CD8-positive, alpha-beta T cell (primary cell): ENCODE measurements at regions of chr10 and their contacts with region 1.

Region 1: DNA sequence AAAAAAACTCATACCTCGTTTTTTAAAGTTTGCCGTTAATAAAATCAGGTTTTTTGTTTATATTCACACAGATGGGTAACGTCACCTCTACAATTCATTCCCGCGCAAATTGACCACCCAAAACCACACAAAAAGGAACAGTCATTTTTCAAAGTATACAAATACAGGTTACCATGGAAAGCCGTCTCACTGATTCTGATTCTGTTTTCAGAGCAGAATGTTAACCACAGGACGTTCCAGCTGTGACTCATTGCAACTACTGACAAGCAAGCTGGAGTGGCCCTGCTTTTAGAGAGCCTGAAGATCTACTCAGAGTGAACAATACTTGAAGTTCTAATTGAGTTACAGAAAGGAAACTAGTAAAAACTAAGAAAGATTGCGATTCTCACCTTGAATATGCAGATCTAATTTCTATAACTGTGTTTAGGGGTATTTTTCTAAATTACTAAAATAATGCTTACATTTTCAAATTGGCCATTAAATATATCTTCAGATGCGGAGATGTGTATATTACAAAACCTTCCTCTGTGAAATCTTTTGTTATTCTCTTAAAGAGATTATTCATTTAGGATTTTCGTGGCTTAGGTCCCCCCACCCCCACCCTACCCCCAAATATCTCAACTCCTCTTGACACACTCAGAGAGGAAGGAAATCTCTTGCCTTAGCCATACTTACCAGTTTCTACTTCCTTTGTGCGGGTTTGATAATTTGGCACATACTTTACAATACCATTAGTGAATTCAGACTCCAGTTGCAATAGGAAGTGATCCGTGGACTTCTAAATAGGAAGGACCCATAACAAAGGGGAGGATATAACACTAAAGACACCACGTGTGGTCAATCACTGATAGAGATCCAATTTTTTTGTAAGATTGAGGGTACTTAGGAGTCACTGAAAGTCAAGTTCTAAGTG is 106.0 kb downstream of the CUBN start:
- DNase-seq: peak; percentile 48 to 96 (median 72)
- ATAC-seq: peak; percentile 67
- H3K4me3 ChIP-seq: peak overlapping the region; percentile 16 to 44
- H3K4me3 Mint-ChIP-seq: peak overlapping the region; percentile 53
- H3K27ac ChIP-seq: peak overlapping the region; percentile 78 to 91
- H3K27ac Mint-ChIP-seq: peak overlapping the region; percentile 95
- H3K4me1 ChIP-seq: peaks cover 68% of the 10 kb centered on the region
- H3K4me1 Mint-ChIP-seq: peaks cover 65% of the 10 kb centered on the region
- H3K27me3 ChIP-seq: no peaks in the 10 kb centered on the region
- H3K27me3 Mint-ChIP-seq: no peaks in the 10 kb centered on the region
- CTCF ChIP-seq: no peak

Region 2: GRCh38 chr10:16828114-16828568 is 195.5 kb before region 1 on chr10:
- CTCF ChIA-PET with region 1: no interaction called
- POLR2A ChIA-PET with region 1: no interaction called
- intact Hi-C with region 1: loop called in 1 of 2 experiments (anchors 10 kb)
- DNase-seq: peak in 8 of 9 experiments; percentile 47 to 87 (median 63)
- ATAC-seq: peak; percentile 96
- H3K4me3 ChIP-seq: no peak overlapping the region
- H3K4me3 Mint-ChIP-seq: no peak overlapping the region
- H3K27ac ChIP-seq: no peak overlapping the region
- H3K27ac Mint-ChIP-seq: peak overlapping the region; percentile 45
- H3K4me1 ChIP-seq: no peaks in the 10 kb centered on the region
- H3K4me1 Mint-ChIP-seq: peaks cover 4% of the 10 kb centered on the region
- H3K27me3 ChIP-seq: no peaks in the 10 kb centered on the region
- H3K27me3 Mint-ChIP-seq: no peaks in the 10 kb centered on the region
- CTCF ChIP-seq: peak; percentile 69

Region 3: DNA sequence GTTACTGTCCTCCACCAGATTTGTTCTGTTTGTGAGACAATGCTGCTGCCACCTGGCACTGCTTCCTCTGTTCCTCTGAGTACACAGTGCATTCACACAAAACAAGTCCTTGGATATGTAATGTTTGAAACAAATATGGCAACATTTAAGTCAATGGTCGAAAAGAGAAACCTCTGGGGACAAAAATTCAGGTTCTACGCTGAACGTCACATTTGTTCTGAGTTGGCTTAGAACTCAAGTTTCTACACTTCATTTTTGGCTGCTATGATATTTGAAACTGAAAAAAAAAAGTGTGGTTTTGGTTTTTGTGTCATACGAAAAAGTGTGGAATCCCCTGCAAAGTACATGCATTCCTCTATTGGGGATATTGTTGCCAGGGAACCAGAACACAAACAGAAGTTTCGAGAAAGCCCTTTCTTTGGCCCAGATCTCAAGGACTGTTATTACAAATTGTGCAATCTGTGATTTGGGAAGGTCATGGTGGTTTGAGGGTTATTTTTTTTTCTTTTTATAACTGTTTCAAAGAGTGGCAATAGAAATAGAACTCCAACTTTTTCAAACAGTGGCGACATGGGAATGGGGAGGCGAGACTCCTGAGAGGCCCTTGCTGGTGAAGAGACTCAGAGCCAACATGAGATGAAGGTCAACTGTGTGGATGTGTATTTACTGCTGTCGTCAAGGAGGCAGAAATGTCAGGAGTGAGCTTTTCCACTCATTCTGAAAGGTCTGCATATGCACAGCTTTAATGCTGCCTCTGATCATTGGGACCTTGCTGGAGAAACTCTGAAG is 21.5 kb before region 1 on chr10:
- CTCF ChIA-PET with region 1: no interaction called
- POLR2A ChIA-PET with region 1: interaction called, 3 read pairs
- intact Hi-C with region 1: loop called (anchors 1 kb)
- DNase-seq: peak in 5 of 9 experiments; percentile 21 to 92 (median 43)
- ATAC-seq: peak; percentile 22
- H3K4me3 ChIP-seq: no peak overlapping the region
- H3K4me3 Mint-ChIP-seq: no peak overlapping the region
- H3K27ac ChIP-seq: peak overlapping the region; percentile 33 to 40
- H3K27ac Mint-ChIP-seq: peak overlapping the region; percentile 87
- H3K4me1 ChIP-seq: peaks cover 41% of the 10 kb centered on the region
- H3K4me1 Mint-ChIP-seq: peaks cover 47% of the 10 kb centered on the region
- H3K27me3 ChIP-seq: no peaks in the 10 kb centered on the region
- H3K27me3 Mint-ChIP-seq: no peaks in the 10 kb centered on the region
- CTCF ChIP-seq: no peak

Region 4: DNA sequence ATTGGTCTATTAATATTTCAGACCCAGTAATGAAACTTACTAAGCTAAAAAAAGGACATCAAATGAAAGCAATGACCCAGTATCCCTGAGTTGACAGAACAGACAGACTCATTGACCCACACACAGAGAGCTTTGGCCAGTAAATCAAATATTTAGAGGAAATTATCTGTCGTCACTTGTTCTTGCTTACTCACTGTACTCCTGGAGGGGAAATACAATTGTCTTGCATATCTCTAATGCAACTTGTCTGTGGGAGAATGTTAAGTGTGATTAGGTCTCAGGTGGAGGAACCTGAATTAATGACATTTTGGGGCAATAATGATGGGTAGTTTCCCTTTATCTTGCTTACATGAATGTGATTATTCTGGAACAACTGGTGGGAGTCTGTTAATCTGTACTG is 25.6 kb after region 1 on chr10:
- CTCF ChIA-PET with region 1: no interaction called
- POLR2A ChIA-PET with region 1: no interaction called
- intact Hi-C with region 1: no loop called
- DNase-seq: no peak
- ATAC-seq: no peak
- H3K4me3 ChIP-seq: no peak overlapping the region
- H3K4me3 Mint-ChIP-seq: no peak overlapping the region
- H3K27ac ChIP-seq: no peak overlapping the region
- H3K27ac Mint-ChIP-seq: no peak overlapping the region
- H3K4me1 ChIP-seq: no peaks in the 10 kb centered on the region
- H3K4me1 Mint-ChIP-seq: peaks cover 2% of the 10 kb centered on the region
- H3K27me3 ChIP-seq: no peaks in the 10 kb centered on the region
- H3K27me3 Mint-ChIP-seq: no peaks in the 10 kb centered on the region
- CTCF ChIP-seq: no peak

Region 5: DNA sequence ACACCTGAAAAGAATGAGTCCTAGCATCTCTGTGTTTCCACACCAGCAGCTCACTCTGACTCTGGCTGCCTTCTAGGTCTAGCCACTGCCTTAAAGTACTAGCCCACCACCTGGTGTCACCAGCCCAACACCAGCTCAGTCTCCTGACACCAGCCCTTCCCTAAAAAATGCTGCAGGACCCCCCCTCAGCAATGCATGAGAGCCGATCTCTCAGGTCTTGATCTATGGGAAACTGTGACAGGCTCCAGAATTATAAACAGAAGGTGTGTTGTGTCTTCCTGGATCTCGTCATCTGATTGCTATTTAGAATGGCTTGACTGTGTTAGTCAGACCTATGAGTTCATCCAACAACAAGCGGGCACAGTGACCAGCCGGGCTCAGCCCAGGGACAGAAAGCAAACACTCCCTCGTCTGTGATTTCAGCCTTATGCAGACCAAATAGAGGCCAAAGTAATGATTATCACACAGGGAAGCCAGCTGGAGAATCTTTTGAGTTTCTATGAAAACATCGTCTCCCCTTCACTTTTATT is 39.4 kb after region 1 on chr10:
- CTCF ChIA-PET with region 1: no interaction called
- POLR2A ChIA-PET with region 1: no interaction called
- intact Hi-C with region 1: loop called in 1 of 2 experiments (anchors 2 kb)
- DNase-seq: no peak
- ATAC-seq: no peak
- H3K4me3 ChIP-seq: no peak overlapping the region
- H3K4me3 Mint-ChIP-seq: no peak overlapping the region
- H3K27ac ChIP-seq: no peak overlapping the region
- H3K27ac Mint-ChIP-seq: no peak overlapping the region
- H3K4me1 ChIP-seq: peaks cover 8% of the 10 kb centered on the region
- H3K4me1 Mint-ChIP-seq: peaks cover 21% of the 10 kb centered on the region
- H3K27me3 ChIP-seq: no peaks in the 10 kb centered on the region
- H3K27me3 Mint-ChIP-seq: no peaks in the 10 kb centered on the region
- CTCF ChIP-seq: no peak

Region 6: GRCh38 chr10:17200912-17201793 is 177.5 kb after region 1 on chr10 and contains the start of gene TRDMT1:
- CTCF ChIA-PET with region 1: no interaction called
- POLR2A ChIA-PET with region 1: interaction called, 3 read pairs
- intact Hi-C with region 1: loop called in 1 of 2 experiments (anchors 1 kb)
- DNase-seq: peak; percentile 66 to 87 (median 76)
- ATAC-seq: peak; percentile 77
- H3K4me3 ChIP-seq: peak within 1 kb of the TSS; percentile 69 to 83
- H3K4me3 Mint-ChIP-seq: peak within 1 kb of the TSS; percentile 98
- H3K27ac ChIP-seq: peak within 1 kb of the TSS; percentile 80 to 92
- H3K27ac Mint-ChIP-seq: peak within 1 kb of the TSS; percentile 97
- H3K4me1 ChIP-seq: peaks cover 21% of the 10 kb centered on the region
- H3K4me1 Mint-ChIP-seq: peaks cover 35% of the 10 kb centered on the region
- H3K27me3 ChIP-seq: no peaks in the 10 kb centered on the region
- H3K27me3 Mint-ChIP-seq: no peaks in the 10 kb centered on the region
- CTCF ChIP-seq: no peak
- total RNA-seq, gene TRDMT1: 10.4 to 11.7 TPM

Region 7: GRCh38 chr10:17375936-17376584 is 352.4 kb after region 1 on chr10:
- CTCF ChIA-PET with region 1: no interaction called
- POLR2A ChIA-PET with region 1: no interaction called
- intact Hi-C with region 1: no loop called
- DNase-seq: peak in 4 of 9 experiments; percentile 12 to 25 (median 20)
- ATAC-seq: no peak
- H3K4me3 ChIP-seq: no peak overlapping the region
- H3K4me3 Mint-ChIP-seq: no peak overlapping the region
- H3K27ac ChIP-seq: no peak overlapping the region
- H3K27ac Mint-ChIP-seq: no peak overlapping the region
- H3K4me1 ChIP-seq: no peaks in the 10 kb centered on the region
- H3K4me1 Mint-ChIP-seq: no peaks in the 10 kb centered on the region
- H3K27me3 ChIP-seq: no peaks in the 10 kb centered on the region
- H3K27me3 Mint-ChIP-seq: no peaks in the 10 kb centered on the region
- CTCF ChIP-seq: no peak